ENCODE measurements at regions of chr9 and their contacts with region 1.

Region 1: DNA sequence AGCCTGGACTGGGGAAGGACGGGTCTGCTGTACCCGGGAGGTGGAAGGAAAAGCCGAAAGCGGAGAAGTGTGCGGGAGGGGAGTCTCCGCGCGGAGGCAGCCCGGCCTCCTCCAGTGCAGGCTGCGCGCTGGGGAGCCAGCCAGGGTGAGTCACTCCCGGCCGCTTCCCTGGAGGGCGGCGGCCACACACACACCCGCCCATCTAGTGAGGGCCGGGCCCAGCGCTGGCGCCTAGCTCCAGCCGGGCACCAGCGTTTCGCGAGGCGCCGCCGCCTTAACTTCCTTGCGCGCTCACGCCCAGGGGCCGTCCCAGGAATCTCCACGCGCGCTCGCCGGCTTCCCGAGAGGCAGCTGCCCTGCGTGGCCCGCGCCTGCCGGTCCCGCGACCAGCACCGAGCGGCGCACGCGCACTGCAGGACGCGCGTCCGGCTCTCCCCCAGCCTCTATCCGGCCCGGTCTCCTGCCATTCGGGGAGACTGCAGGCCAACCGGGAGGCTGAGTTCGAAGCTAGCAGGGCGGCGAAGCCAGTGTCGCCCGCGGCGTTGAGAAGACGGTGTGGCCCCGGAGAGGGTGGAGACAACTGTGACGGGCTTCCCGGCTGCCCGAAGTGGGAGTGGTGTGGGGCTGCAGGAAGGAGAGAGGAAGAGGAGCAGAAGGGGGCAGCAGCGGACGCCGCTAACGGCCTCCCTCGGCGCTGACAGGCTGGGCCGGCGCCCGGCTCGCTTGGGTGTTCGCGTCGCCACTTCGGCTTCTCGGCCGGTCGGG is at the start of gene JAK2:
- DNase-seq: peak; percentile 90 to 98
- H3K4me3 ChIP-seq: peak within 1 kb of the TSS; percentile 59
- CTCF ChIP-seq: no peak
- POLR2A ChIP-seq: no peak
- total RNA-seq, gene JAK2: 24.1 to 46.2 (median 34.4) TPM

Region 2: GRCh38 chr9:4762108-4762885 is 222.5 kb before region 1 on chr9:
- intact Hi-C with region 1: loop called (anchors 5 kb)
- DNase-seq: peak; percentile 76 to 94
- H3K4me3 ChIP-seq: no peak overlapping the region
- CTCF ChIP-seq: peak in 1 of 3 donors; percentile 44
- POLR2A ChIP-seq: no peak